OCI-LY7 (cell line): ENCODE measurements at regions of chr10 and their contacts with region 1.

Region 1: GRCh38 chr10:88091490-88092105 is 228.2 kb downstream of the PTEN start:
- DNase-seq: peak; percentile 73
- H3K4me3 ChIP-seq: no peak overlapping the region
- H3K27ac ChIP-seq: peak overlapping the region; percentile 26
- H3K4me1 ChIP-seq: peaks cover 30% of the 10 kb centered on the region
- CTCF ChIP-seq: peak; percentile 39; the same call in 1 of the 2 replicates

Region 2: GRCh38 chr10:87635610-87636312 is 455.8 kb before region 1 on chr10:
- CTCF ChIA-PET with region 1: no interaction called
- POLR2A ChIA-PET with region 1: no interaction called
- intact Hi-C with region 1: no loop called
- DNase-seq: no peak
- H3K4me3 ChIP-seq: no peak overlapping the region
- H3K27ac ChIP-seq: no peak overlapping the region
- H3K4me1 ChIP-seq: no peaks in the 10 kb centered on the region
- CTCF ChIP-seq: no peak

Region 3: GRCh38 chr10:87804939-87805569 is 286.5 kb before region 1 on chr10:
- CTCF ChIA-PET with region 1: no interaction called
- POLR2A ChIA-PET with region 1: no interaction called
- intact Hi-C with region 1: no loop called
- DNase-seq: no peak
- H3K4me3 ChIP-seq: no peak overlapping the region
- H3K27ac ChIP-seq: no peak overlapping the region
- H3K4me1 ChIP-seq: no peaks in the 10 kb centered on the region
- CTCF ChIP-seq: no peak

Region 4: DNA sequence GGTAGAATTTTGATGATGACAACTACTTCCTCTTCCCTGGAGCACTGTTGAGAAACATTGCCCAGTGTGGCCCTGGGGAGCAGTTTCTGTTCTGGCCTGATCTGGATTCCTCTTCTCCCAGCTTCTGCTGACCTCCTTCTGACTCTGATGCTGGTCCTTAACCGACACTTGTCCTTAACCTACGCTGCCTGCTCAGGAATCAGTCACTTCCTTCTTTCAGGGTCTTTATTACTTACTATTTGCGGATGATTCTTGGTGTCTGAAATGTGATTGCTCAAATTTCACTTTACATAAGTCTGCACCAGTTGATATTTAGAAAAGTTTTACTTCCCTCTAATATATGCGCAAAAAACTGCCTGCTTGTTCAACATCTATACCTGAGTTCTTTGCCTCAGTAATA is 64.0 kb before region 1 on chr10:
- CTCF ChIA-PET with region 1: no interaction called
- POLR2A ChIA-PET with region 1: interaction called, 4 read pairs
- intact Hi-C with region 1: loop called (anchors 1 kb)
- DNase-seq: peak; percentile 61
- H3K4me3 ChIP-seq: peak overlapping the region; percentile 47
- H3K27ac ChIP-seq: peak overlapping the region; percentile 70
- H3K4me1 ChIP-seq: peaks cover 29% of the 10 kb centered on the region
- CTCF ChIP-seq: no peak

Region 5: DNA sequence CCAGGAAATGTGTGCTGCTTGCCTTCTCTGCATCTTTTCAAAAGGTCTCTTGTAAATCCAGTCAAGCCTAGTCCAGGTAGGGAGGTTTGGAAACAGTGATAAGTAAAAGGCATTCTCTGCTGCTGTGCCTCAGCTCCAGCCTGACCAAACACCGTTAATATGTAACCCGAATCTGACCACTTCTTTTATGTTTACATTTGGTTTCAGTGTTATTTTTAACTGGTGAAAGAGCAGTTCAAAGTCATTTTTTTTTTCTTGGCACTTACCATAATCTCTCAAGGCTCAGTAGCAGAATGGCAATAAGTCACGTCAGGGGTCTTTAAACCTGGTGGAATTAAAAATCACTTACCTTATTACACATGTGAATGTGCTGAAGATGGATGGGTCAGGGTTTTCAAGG is 11.4 kb before region 1 on chr10:
- CTCF ChIA-PET with region 1: interaction called, 12 read pairs
- POLR2A ChIA-PET with region 1: interaction called, 40 read pairs
- intact Hi-C with region 1: no loop called
- DNase-seq: peak; percentile 44
- H3K4me3 ChIP-seq: peak overlapping the region; percentile 26
- H3K27ac ChIP-seq: peak overlapping the region; percentile 13
- H3K4me1 ChIP-seq: peaks cover 67% of the 10 kb centered on the region
- CTCF ChIP-seq: no peak

Region 6: DNA sequence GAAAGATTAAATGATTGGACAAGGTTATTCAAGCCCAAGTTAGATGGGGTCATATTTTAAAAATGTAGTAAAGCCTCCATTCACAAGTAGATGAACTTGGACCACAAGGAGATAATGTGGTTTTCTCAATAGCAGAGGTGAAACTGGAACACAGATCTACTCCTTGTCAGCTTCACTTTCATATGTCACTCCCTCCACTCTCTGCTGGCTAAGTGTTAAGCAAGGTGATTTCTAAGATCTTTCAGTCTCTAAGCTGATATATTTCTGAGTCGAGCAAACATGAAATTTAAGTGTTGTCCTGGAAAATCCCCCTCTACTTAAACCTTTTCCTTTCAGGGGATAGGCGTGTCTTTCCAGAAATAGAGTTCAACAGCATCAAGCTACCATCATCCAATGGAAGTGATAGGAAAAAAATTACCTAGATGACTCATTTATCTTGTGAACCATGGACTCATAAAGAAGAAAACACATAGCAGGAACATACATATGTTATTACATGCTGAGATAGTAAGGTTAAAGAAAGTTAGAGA is 46.8 kb after region 1 on chr10:
- CTCF ChIA-PET with region 1: no interaction called
- POLR2A ChIA-PET with region 1: no interaction called
- intact Hi-C with region 1: loop called (anchors 1 kb)
- DNase-seq: no peak
- H3K4me3 ChIP-seq: no peak overlapping the region
- H3K27ac ChIP-seq: no peak overlapping the region
- H3K4me1 ChIP-seq: no peaks in the 10 kb centered on the region
- CTCF ChIP-seq: no peak